ENCODE measurements at regions of chr6 and their contacts with region 1.

Region 1: DNA sequence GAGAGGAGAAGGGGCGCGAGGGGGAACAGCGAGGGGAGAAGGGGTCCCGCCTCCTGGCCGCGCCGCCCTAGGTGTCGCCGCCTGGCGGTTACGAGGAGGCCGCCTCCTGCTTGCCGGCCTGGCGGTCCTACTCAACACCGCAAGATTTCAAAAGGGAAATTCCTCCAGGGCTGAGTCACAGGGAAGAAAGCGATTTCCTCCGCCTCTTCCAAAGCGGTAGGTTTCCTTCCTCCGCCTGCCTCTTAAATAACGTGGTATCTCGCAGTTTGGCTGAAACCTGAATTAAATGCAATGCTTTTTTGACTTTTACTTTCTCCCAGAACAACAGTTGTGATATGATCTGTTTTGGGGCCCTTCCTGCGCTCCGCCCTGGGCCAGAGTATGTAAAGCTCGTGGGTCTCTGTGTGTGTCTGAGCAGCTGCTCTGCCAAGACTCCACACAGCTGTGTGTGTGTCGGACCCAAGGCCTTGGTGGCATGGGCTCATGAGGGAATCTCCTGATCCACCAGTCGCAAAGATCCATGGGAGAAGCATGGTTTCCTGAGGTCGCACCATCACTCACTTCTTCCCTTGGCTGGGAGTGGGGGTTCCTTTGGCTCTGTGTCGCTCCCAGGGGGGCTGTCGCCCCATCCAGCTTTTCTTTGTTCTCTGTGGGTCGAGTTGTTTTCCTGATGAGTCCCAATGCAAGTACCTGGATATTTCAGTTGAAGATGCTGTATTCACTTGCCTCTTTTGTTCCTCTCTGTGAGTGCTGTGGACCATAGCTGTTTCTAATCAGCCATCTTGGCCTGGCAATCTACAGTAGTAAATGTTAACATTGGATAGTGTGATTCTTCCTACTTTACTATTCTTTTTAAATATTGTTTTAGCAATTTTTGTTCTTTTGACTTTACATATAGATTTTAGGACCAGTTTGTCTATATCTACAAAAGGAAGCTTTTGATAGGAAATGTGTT is 31.6 kb upstream of the NOTCH4 start:
- DNase-seq: no peak
- ATAC-seq: peak; percentile 93
- H3K4me3 ChIP-seq: no peak overlapping the region
- H3K27ac ChIP-seq: no peak overlapping the region; the same call in 1 of the 2 replicates
- H3K4me1 ChIP-seq: peaks cover 10% of the 10 kb centered on the region
- H3K27me3 ChIP-seq: no peaks in the 10 kb centered on the region
- CTCF ChIP-seq: peak; percentile 42 to 70 (median 50)
- EP300 ChIP-seq: no peak
- POLR2A ChIP-seq: no peak
- RAD21 ChIP-seq: peak; percentile 42; the same call in 1 of the 2 replicates

Region 2: GRCh38 chr6:32271429-32271828 is 16.0 kb after region 1 on chr6:
- CTCF ChIA-PET with region 1: interaction called, 17 read pairs
- POLR2A ChIA-PET with region 1: interaction called, 19 read pairs
- RAD21 ChIA-PET with region 1: interaction called, 19 read pairs
- SMC1A ChIA-PET with region 1: interaction called, 39 read pairs
- in situ Hi-C with region 1: no loop called
- intact Hi-C with region 1: no loop called
- DNase-seq: no peak
- ATAC-seq: peak; percentile 55
- H3K4me3 ChIP-seq: no peak overlapping the region
- H3K27ac ChIP-seq: no peak overlapping the region
- H3K4me1 ChIP-seq: peaks cover 23% of the 10 kb centered on the region; the same call in 1 of the 2 replicates
- H3K27me3 ChIP-seq: no peaks in the 10 kb centered on the region
- CTCF ChIP-seq: no peak
- EP300 ChIP-seq: no peak
- POLR2A ChIP-seq: no peak
- RAD21 ChIP-seq: no peak

Region 3: DNA sequence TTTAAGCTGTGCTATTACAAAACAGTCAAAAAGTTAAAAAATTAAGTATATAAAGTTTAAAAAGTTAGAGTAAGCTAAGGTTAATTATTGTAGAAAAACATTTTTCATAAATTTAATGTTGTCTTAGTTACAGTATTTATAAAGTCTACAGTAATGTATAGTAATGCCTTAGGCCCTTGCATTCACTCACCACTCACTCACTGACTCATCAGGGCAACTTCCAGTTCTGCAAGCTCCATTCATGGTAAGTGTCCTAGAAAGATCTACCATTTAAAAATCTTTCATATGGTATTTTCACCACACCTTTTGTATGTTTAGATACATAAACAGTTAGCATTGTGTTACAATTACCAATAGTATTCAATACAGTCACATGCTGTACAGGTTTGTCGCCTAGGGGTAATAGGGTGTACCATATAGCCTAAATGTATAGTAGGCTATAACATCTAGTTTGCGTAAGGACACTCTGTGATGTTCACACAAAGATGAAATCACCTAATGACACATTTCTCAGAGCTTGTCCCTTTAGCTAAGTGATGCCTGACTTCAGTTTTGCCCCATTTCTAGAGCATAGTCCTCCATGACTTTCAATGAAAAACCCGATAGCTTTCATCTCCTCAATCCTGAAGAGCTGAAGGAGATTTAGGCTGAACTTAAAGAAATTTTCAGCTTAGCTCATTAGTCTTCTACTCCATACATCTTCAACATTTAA is 169.3 kb after region 1 on chr6:
- CTCF ChIA-PET with region 1: no interaction called
- POLR2A ChIA-PET with region 1: no interaction called
- RAD21 ChIA-PET with region 1: no interaction called
- SMC1A ChIA-PET with region 1: no interaction called
- in situ Hi-C with region 1: no loop called
- intact Hi-C with region 1: no loop called
- DNase-seq: no peak
- ATAC-seq: no peak
- H3K4me3 ChIP-seq: no peak overlapping the region
- H3K27ac ChIP-seq: no peak overlapping the region
- H3K4me1 ChIP-seq: no peaks in the 10 kb centered on the region
- H3K27me3 ChIP-seq: peaks cover 1 to 3% of the 10 kb centered on the region in 2 experiments; a peak in 2 of 4 replicates
- CTCF ChIP-seq: no peak
- EP300 ChIP-seq: no peak
- POLR2A ChIP-seq: no peak
- RAD21 ChIP-seq: no peak